Right cardiac atrium (tissue), 5 donors: ENCODE measurements at regions of chr7 and their contacts with region 1.

Region 1: GRCh38 chr7:48109848-48110663 is 21.0 kb downstream of the UPP1 start:
- DNase-seq: peak; percentile 60 to 90 (median 85)
- ATAC-seq: peak; percentile 55 to 73
- H3K4me3 ChIP-seq: no peak overlapping the region
- H3K27ac ChIP-seq: no peak overlapping the region
- H3K4me1 ChIP-seq: no peaks in the 10 kb centered on the region
- H3K27me3 ChIP-seq: no peaks in the 10 kb centered on the region

Region 2: DNA sequence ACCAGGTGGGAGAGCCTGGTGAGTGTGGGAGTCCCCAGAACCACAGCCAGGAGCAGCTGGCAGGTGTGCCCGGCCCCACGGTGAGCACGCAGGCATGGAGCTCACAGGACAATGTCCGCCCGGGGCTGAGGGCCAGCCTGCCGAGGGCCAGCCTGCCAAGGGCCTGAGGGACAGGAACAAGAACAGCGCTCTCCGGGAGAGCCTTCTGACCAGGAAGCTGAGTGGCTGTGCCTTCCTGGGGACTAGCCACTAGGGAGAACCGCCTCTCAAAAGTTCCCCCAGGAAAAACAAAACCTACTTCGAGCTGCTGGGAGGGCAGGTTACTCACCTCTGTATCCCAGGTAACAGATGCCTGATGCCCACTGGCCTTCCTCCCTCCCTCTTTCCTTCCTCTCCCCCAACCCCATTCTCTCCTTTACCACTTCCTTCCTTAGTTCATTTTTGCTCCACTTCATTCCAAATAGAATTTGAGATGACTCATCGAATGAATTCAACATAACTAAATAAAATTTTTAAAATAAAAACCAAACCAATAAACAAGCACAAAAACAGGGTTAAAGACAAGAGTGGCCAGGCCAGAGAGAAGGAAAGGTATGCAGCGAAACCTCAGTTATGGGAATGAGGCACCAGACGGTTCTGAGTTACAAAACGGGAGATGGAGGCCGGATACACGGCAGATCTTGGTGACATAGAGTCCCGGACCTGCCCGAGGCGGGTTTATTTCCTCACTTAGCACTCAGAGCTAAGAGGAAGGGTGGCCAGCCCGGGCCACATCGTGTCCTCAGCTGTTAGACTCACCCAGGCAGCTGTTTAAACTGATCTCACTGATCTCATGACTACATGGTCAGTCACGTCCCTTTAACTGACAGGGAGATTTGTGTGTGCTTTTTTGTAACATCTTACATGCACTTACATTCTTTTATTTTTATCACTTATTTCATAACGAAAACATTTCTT is 656.7 kb before region 1 on chr7:
- intact Hi-C with region 1: no loop called
- DNase-seq: peak in 2 of 3 donors; percentile 69 to 83
- ATAC-seq: peak; percentile 70 to 86
- H3K4me3 ChIP-seq: no peak overlapping the region
- H3K27ac ChIP-seq: peak overlapping the region; percentile 79
- H3K4me1 ChIP-seq: peaks cover 16% of the 10 kb centered on the region
- H3K27me3 ChIP-seq: no peaks in the 10 kb centered on the region

Region 3: GRCh38 chr7:47945261-47946001 is 164.6 kb before region 1 on chr7:
- intact Hi-C with region 1: loop called in 1 of 4 experiments (anchors 5 kb)
- DNase-seq: peak; percentile 81 to 94 (median 84)
- ATAC-seq: no peak
- H3K4me3 ChIP-seq: no peak overlapping the region
- H3K27ac ChIP-seq: no peak overlapping the region
- H3K4me1 ChIP-seq: peaks cover 8% of the 10 kb centered on the region
- H3K27me3 ChIP-seq: no peaks in the 10 kb centered on the region

Region 4: GRCh38 chr7:47991741-47992311 is 118.2 kb before region 1 on chr7:
- intact Hi-C with region 1: loop called (anchors 2 to 5 kb)
- DNase-seq: peak; percentile 87 to 95 (median 94)
- ATAC-seq: peak; percentile 99 to 100
- H3K4me3 ChIP-seq: peak overlapping the region; percentile 70
- H3K27ac ChIP-seq: peak overlapping the region; percentile 3
- H3K4me1 ChIP-seq: no peaks in the 10 kb centered on the region
- H3K27me3 ChIP-seq: no peaks in the 10 kb centered on the region

Region 5: DNA sequence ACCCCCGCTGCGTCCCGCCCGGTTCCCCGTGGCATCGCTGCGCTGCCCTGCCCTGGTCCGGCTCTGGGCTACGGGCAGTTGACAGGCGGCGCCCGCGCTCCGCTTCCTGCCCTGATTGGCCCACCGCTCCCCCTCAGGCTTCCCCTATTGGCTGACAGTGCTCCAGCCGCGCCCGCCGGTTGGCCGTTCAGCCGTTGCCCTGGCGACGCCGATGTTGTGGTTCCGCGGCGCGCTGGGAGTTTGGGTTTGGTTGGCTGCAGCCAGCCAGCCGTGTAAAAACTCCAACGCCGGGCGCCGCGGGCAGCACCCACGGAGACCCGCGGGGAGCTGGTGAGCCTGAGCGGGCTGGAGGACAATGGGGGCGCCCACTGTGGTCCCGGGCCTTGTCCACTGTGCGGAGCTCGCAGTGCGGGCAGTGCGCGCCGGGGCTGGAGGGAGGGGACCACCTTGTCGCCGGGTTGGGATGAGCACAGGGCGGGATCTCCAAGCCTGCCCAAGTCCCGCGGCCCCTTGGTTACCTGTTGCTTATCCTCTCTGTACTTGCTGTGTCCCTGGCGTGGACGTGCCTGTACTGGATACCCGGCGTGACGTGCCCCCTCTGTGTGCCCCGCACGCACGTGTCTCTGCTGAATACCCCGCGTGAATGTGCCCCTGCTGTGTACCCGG is 74.6 kb before region 1 on chr7 and contains the start of gene C7orf57:
- intact Hi-C with region 1: loop called in 2 of 4 experiments (anchors 10 kb)
- DNase-seq: peak; percentile 95 to 97 (median 97)
- ATAC-seq: peak; percentile 100
- H3K4me3 ChIP-seq: peak within 1 kb of the TSS; percentile 44
- H3K27ac ChIP-seq: no peak within 1 kb of the TSS
- H3K4me1 ChIP-seq: no peaks in the 10 kb centered on the region
- H3K27me3 ChIP-seq: no peaks in the 10 kb centered on the region
- total RNA-seq, gene C7orf57: not detected